Sigmoid colon (tissue), 7 donors: ENCODE measurements at regions of chr20 and their contacts with region 1.

Region 1: DNA sequence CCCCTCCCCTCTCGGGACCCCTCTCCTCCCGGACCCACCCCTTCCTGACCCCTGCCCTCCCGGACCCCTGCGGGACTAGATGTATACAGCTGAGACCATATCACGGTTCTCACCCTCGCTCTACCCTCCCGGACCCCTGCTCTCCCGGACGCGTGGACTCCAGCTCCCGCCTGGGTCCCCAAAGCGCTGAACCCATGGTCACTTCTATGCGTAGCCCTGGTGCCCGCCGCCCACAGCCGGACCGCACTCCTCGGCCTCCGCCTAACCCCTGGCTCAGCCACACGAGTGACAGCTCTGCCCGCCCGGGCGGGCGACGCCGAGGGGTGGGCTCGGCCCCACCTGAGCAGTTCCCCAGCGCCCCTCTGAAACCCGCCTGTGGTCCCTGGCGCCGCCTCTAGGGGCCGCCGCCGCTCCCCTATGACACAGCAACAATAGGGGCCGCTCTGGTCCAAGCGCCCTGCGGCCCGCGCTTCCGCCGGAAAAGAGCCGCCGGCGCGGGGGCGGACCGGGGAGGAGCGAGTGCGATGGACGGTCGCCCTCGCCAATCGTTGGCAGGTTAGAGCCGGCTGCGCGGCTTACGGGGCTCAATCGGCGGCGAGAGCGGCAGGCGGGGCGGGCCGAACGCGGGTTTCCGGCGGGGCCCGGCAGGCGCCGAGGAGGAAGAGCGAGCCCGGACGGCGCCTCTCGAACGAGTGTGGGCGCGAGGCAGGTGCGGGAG is at the start of gene ADRM1:
- DNase-seq: peak; percentile 97
- H3K4me3 ChIP-seq: peak within 1 kb of the TSS; percentile 57 to 99 (median 76)
- H3K27ac ChIP-seq: peak within 1 kb of the TSS; percentile 93 to 99 (median 97)
- H3K4me1 ChIP-seq: peaks cover 0 to 41% (median 30%) of the 10 kb centered on the region in 4 donors
- H3K27me3 ChIP-seq: no peaks in the 10 kb centered on the region
- CTCF ChIP-seq: peak; percentile 92 to 98 (median 96)
- EP300 ChIP-seq: no peak
- POLR2A ChIP-seq: peak; percentile 19 to 40
- total RNA-seq, gene ADRM1: 100 to 130 (median 119) TPM

Region 2: DNA sequence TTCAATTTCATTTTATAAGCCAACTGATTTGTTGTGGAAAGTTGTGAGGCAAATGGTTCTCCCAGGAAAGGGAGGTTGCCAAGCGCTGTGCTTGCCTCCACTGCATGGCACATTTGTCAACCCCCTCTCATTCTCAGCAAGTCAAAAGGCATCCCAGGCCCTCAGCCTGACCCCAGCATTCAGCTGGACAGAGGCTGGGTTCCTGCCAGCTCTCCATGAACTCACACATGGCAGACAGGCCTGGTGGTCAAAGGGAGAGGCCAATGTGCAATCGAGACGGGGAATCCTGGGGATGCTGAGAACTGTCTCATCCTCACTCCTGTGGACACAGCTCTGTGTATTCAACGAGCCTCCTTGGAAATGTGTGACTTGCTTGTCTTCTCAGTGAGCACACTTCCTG is 1156.5 kb before region 1 on chr20:
- intact Hi-C with region 1: no loop called
- DNase-seq: no peak
- H3K4me3 ChIP-seq: no peak overlapping the region
- H3K27ac ChIP-seq: no peak overlapping the region
- H3K4me1 ChIP-seq: no peaks in the 10 kb centered on the region
- H3K27me3 ChIP-seq: no peaks in the 10 kb centered on the region
- CTCF ChIP-seq: no peak
- EP300 ChIP-seq: no peak
- POLR2A ChIP-seq: no peak

Region 3: DNA sequence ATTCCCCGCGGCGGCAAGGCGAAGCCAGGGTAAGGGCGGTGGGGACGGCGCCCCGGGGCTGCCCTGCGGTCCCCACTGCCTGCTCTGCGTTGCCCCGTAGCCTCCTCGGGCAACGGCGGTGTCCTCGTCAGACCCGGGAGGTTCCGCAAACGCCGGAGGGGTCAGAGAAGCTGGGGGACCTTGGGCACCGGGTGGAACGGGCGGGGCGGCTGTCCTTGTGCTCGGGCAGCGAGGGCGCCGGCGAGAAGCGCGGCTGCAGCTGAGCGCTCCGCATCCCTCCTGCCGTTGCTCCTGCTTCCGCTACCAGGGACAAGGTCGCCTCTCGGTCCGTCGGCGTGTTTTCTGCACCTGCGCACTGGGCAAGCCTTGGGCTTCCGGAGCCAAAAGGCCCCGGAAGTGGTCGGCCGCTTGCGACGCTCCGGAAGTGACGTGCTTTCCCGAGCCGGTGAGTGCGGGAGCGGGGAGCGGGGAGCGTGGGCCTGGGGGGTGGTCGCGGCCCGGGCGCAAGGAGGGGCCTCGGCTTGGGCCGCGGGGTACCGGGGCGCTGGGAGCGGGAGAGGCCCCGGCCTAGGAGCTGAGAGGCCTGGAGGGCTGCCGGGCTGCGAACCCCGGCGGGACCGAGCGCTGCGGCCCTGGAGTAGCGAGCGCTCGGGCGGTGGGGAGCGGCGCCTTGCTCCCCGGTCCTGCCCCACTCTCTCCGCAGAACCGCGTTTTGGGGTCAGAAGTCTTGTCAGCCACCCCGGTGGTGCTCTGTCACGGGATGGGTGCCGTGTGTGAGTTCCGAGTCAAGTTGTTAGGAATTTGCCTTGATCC is 119.7 kb before region 1 on chr20 and contains the start of gene MTG2:
- intact Hi-C with region 1: no loop called
- DNase-seq: peak; percentile 97
- H3K4me3 ChIP-seq: peak within 1 kb of the TSS; percentile 61 to 92 (median 84)
- H3K27ac ChIP-seq: peak within 1 kb of the TSS; percentile 91 to 96 (median 94)
- H3K4me1 ChIP-seq: peaks cover 0 to 25% (median 19%) of the 10 kb centered on the region in 4 donors
- H3K27me3 ChIP-seq: no peaks in the 10 kb centered on the region
- CTCF ChIP-seq: no peak
- EP300 ChIP-seq: peak in 1 of 4 donors; percentile 51
- POLR2A ChIP-seq: peak; percentile 83 to 87
- total RNA-seq, gene MTG2: 13.3 to 28.1 (median 21.2) TPM

Region 4: GRCh38 chr20:62344782-62345181 is 42.3 kb after region 1 on chr20:
- intact Hi-C with region 1: loop called (anchors 5 kb)
- DNase-seq: no peak
- H3K4me3 ChIP-seq: no peak overlapping the region
- H3K27ac ChIP-seq: peak overlapping the region in 3 of 4 donors; percentile 34 to 63 (median 49)
- H3K4me1 ChIP-seq: peaks cover 0 to 6% (median 0%) of the 10 kb centered on the region in 4 donors
- H3K27me3 ChIP-seq: no peaks in the 10 kb centered on the region
- CTCF ChIP-seq: no peak
- EP300 ChIP-seq: no peak
- POLR2A ChIP-seq: no peak

Region 5: DNA sequence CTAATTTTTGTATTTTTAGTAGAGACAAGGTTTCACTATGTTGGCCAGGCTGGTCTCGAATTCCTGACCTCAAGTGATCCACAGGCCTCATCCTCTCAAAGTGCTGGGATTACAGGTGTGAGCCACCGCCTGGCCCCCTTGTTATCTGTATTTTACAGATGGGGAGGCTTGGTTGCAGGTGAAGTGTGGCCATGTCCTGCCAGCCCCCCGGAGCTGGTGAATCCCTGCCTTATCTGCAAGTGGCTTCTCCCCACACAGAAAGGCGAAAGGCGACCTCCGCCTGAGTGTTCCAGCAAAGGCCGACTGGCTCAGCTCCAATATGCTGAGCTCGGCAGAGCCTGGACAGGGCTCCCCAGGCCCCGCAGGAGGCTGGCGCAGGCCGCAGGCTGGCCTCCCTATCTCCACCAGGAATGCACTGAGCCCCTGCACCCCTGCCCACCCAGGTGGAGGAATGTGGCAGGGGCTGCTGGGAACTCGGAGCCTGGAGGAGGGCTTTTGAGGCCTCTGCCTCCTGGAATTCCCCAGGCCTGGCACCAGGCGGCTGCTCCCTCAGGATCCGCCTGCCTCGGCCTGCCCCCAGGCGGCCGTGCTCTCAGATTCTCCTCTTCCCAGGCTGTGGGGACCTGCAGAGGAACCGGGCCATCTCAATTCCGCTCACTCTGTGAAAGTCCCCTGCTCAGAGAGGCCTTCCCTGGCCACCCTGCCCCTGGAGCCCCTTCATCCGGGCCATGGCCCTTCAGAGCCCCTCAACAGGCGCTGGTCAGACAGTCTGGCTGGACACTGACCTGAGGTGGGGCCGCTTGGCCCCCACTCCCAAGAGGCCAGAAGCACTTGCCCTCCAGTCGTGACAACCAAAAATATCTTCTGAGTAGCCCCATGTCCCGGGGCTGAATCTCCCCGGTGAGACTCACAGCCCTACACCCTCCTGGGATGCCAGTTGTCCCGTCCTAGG is 73.9 kb after region 1 on chr20:
- intact Hi-C with region 1: loop called (anchors 2 kb)
- DNase-seq: peak; percentile 87
- H3K4me3 ChIP-seq: no peak overlapping the region
- H3K27ac ChIP-seq: peak overlapping the region; percentile 81 to 99 (median 86)
- H3K4me1 ChIP-seq: peaks cover 0 to 71% (median 66%) of the 10 kb centered on the region in 4 donors
- H3K27me3 ChIP-seq: no peaks in the 10 kb centered on the region
- CTCF ChIP-seq: peak; percentile 63 to 77 (median 71)
- EP300 ChIP-seq: peak in 1 of 4 donors; percentile 10
- POLR2A ChIP-seq: no peak

Region 6: GRCh38 chr20:62386383-62387218 is 84.1 kb after region 1 on chr20 and contains the start of gene RPS21:
- intact Hi-C with region 1: loop called (anchors 1 kb)
- DNase-seq: peak; percentile 97
- H3K4me3 ChIP-seq: peak within 1 kb of the TSS; percentile 84 to 100 (median 94)
- H3K27ac ChIP-seq: peak within 1 kb of the TSS; percentile 91 to 99 (median 96)
- H3K4me1 ChIP-seq: peaks cover 0 to 34% (median 30%) of the 10 kb centered on the region in 4 donors
- H3K27me3 ChIP-seq: no peaks in the 10 kb centered on the region
- CTCF ChIP-seq: no peak
- EP300 ChIP-seq: peak in 1 of 4 donors; percentile 46
- POLR2A ChIP-seq: peak; percentile 77 to 81
- total RNA-seq, gene RPS21: 2,383 to 8,235 (median 5,456) TPM

Region 7: GRCh38 chr20:62407221-62407992 is 104.9 kb after region 1 on chr20 and contains the start of gene CABLES2:
- intact Hi-C with region 1: loop called (anchors 1 kb)
- DNase-seq: peak; percentile 97
- H3K4me3 ChIP-seq: peak within 1 kb of the TSS; percentile 55 to 82 (median 71)
- H3K27ac ChIP-seq: peak within 1 kb of the TSS; percentile 55 to 78 (median 66)
- H3K4me1 ChIP-seq: peaks cover 0 to 40% (median 39%) of the 10 kb centered on the region in 4 donors
- H3K27me3 ChIP-seq: no peaks in the 10 kb centered on the region
- CTCF ChIP-seq: peak in 2 of 4 experiments; percentile 38
- EP300 ChIP-seq: no peak
- POLR2A ChIP-seq: no peak
- total RNA-seq, gene CABLES2: 1.8 to 6.5 (median 4.2) TPM

Region 8: GRCh38 chr20:62500237-62500864 is 197.9 kb after region 1 on chr20:
- intact Hi-C with region 1: loop called (anchors 5 kb)
- DNase-seq: peak; percentile 84
- H3K4me3 ChIP-seq: no peak overlapping the region
- H3K27ac ChIP-seq: no peak overlapping the region
- H3K4me1 ChIP-seq: peaks cover 0 to 23% (median 14%) of the 10 kb centered on the region in 4 donors
- H3K27me3 ChIP-seq: peaks cover 0 to 19% (median 8%) of the 10 kb centered on the region in 3 donors
- CTCF ChIP-seq: peak; percentile 89 to 96 (median 94)
- EP300 ChIP-seq: no peak
- POLR2A ChIP-seq: no peak